ENCODE measurements at regions of chr7 and their contacts with region 1.

Region 1: GRCh38 chr7:95690367-95690947 is 81.9 kb upstream of the DYNC1I1 start:
- ATAC-seq: peak; percentile 72 to 93 (median 86)
- H3K4me3 ChIP-seq: peak overlapping the region in 2 of 5 donors; percentile 9 to 13
- H3K27ac ChIP-seq: no peak overlapping the region
- H3K4me1 ChIP-seq: peaks cover 13 to 30% of the 10 kb centered on the region in 2 donors

Region 2: DNA sequence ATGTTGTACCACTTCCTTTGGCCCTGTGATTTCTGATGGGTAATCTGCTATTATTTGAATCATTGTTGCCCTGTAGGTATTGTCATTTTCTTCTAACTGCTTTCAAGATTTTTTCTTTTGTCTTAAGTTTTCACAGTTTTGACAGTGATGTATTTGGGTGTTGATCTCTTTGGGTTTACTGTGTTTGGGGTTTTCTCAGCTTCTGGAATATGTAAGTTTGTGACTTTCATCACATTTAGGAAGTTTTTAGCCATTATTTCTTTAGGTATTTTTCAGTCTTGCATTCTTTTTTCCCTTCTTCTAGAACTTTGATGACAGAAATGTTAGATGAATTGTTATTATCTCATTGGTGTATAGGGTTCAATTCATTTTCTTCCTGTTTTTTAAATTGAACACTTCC is 232.5 kb before region 1 on chr7:
- in situ Hi-C with region 1: no loop called
- ATAC-seq: no peak
- H3K4me3 ChIP-seq: no peak overlapping the region
- H3K27ac ChIP-seq: no peak overlapping the region
- H3K4me1 ChIP-seq: no peaks in the 10 kb centered on the region

Region 3: GRCh38 chr7:95511716-95512260 is 178.7 kb before region 1 on chr7:
- in situ Hi-C with region 1: loop called in 1 of 9 experiments (anchors 25 kb)
- ATAC-seq: peak; percentile 56 to 97 (median 77)
- H3K4me3 ChIP-seq: no peak overlapping the region
- H3K27ac ChIP-seq: no peak overlapping the region
- H3K4me1 ChIP-seq: peaks cover 11 to 13% of the 10 kb centered on the region in 2 donors

Region 4: DNA sequence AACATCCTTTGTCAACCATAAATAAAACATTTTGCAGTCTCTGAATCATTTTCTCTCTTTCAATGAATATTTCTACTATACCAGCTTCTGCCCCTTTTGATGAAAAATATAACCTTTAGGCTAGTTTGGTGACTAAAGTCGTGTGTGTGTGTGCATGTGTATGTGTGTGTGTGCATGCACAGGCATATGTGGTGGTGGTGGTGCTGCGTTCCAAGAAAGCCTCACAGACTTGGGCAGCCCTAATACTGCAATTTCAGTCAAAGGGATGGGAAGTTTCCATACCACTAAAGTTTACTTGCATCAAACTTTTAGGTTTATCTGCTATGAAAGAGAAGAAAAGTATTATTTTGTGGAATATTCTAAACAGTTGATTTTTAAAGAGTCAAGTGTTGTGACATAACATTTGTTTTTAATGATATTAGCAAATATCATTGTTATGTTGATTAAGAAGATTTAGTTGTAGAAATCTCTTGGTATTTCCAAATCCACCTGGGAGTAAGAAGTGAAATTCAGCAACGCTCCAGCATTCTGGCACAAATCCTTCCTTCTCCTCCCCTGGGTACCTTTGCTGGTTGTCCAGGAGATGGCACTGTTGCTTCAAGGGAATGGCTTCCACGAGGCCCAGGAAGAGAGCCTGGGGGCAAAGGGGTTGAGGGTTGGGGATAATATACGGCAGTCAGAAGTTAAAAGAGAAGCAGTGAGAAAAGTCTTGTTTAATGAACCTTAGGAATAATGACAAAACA is 163.3 kb before region 1 on chr7:
- in situ Hi-C with region 1: loop called in 4 of 9 experiments (anchors 25 kb)
- ATAC-seq: peak in 6 of 8 experiments; percentile 45 to 96 (median 76)
- H3K4me3 ChIP-seq: no peak overlapping the region
- H3K27ac ChIP-seq: no peak overlapping the region
- H3K4me1 ChIP-seq: peaks cover 0 to 2% of the 10 kb centered on the region in 2 donors

Region 5: DNA sequence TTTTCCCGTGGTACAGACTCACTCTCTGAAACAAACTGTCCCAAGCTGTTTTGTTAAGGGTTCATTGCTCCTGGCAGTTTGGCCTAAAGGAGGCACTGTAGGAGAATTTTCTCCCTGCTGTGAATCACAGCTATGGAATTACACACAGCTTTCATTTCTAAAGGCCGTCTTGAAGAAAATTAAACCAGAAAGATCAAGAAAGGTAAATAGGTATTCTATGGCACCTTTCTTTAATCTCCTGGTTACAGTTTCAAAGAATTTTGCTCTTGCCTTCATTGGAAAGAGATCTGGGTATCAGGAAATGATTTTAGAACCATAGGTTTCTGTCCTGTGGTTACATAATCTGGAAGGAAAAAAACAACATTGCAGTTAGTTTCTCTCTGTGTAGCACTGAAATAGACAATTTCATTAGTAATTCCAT is 145.4 kb before region 1 on chr7:
- in situ Hi-C with region 1: loop called in 4 of 9 experiments (anchors 10 to 25 kb)
- ATAC-seq: peak in 6 of 8 experiments; percentile 60 to 96 (median 84)
- H3K4me3 ChIP-seq: no peak overlapping the region
- H3K27ac ChIP-seq: no peak overlapping the region
- H3K4me1 ChIP-seq: no peaks in the 10 kb centered on the region

Measured in motor neuron (in vitro differentiated cells).